Mammary epithelial cell (primary cell): ENCODE measurements at regions of chr6 and their contacts with region 1.

Region 1: DNA sequence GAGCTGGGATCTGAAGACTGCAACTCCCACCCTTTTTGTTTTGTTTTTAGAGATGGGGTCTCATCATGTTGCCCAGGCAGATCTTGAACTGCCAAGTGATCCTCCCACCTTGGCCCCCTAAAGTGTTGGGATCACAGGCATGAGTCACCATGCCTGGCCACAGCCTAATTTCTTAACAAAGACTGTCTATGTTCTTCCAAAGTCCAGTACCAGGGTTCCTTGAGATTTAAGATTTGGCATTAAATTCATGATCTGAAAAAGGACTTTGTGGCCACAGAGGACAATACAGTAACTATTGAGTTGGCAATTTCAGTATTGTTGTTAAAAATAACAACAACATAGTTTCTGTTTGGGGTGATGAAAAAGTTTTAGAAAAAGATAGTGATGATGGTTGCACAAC is 28.7 kb upstream of the BEND3 start:
- DNase-seq: peak; percentile 15
- H3K4me3 ChIP-seq: no peak overlapping the region
- H3K27ac ChIP-seq: no peak overlapping the region
- H3K4me1 ChIP-seq: no peaks in the 10 kb centered on the region
- H3K27me3 ChIP-seq: no peaks in the 10 kb centered on the region
- CTCF ChIP-seq: no peak

Region 2: DNA sequence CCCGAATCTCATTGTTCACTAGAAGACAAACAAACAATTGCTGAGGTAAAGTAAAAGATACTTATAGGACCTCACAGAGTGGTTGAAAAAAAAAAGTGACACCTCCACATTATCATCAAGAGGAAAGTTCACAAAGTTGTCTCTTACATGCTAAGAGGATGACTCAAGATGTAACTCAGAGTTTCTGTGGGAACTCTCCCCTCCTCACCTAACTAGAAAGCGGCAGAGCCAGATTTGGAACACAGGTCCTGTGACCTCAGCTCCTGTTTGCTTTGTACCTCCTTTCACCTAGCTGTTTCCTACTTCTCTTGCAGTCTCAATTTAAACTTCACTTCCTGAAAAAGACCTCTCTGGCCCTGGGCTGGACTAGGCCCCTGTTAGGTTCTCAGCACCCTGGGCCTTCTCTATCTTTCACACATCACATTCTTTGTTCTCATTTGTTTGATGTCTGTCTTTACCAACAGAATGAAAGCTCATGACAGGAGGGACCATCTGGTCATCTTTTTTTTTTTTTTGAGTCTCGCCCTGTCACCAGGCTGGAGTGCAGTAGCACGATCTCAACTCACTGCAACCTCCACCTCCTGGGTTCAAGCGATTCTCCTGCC is 230.2 kb before region 1 on chr6:
- CTCF ChIA-PET with region 1: no interaction called
- dilution Hi-C with region 1: no loop called
- in situ Hi-C with region 1: no loop called
- intact Hi-C with region 1: no loop called
- DNase-seq: peak; percentile 89
- H3K4me3 ChIP-seq: no peak overlapping the region
- H3K27ac ChIP-seq: no peak overlapping the region
- H3K4me1 ChIP-seq: peaks cover 4% of the 10 kb centered on the region
- H3K27me3 ChIP-seq: no peaks in the 10 kb centered on the region
- CTCF ChIP-seq: no peak

Region 3: GRCh38 chr6:107154801-107155160 is 10.8 kb after region 1 on chr6:
- CTCF ChIA-PET with region 1: interaction called, 10 read pairs
- dilution Hi-C with region 1: no loop called
- in situ Hi-C with region 1: no loop called
- intact Hi-C with region 1: no loop called
- DNase-seq: no peak
- H3K4me3 ChIP-seq: no peak overlapping the region
- H3K27ac ChIP-seq: no peak overlapping the region
- H3K4me1 ChIP-seq: no peaks in the 10 kb centered on the region
- H3K27me3 ChIP-seq: no peaks in the 10 kb centered on the region
- CTCF ChIP-seq: no peak

Region 4: GRCh38 chr6:107192830-107193229 is 48.8 kb after region 1 on chr6:
- CTCF ChIA-PET with region 1: no interaction called
- dilution Hi-C with region 1: no loop called
- in situ Hi-C with region 1: no loop called
- intact Hi-C with region 1: no loop called
- DNase-seq: no peak
- H3K4me3 ChIP-seq: no peak overlapping the region
- H3K27ac ChIP-seq: no peak overlapping the region
- H3K4me1 ChIP-seq: no peaks in the 10 kb centered on the region
- H3K27me3 ChIP-seq: no peaks in the 10 kb centered on the region
- CTCF ChIP-seq: no peak